H1 (cell line): ENCODE measurements at regions of chr10 and their contacts with region 1.

Region 1: DNA sequence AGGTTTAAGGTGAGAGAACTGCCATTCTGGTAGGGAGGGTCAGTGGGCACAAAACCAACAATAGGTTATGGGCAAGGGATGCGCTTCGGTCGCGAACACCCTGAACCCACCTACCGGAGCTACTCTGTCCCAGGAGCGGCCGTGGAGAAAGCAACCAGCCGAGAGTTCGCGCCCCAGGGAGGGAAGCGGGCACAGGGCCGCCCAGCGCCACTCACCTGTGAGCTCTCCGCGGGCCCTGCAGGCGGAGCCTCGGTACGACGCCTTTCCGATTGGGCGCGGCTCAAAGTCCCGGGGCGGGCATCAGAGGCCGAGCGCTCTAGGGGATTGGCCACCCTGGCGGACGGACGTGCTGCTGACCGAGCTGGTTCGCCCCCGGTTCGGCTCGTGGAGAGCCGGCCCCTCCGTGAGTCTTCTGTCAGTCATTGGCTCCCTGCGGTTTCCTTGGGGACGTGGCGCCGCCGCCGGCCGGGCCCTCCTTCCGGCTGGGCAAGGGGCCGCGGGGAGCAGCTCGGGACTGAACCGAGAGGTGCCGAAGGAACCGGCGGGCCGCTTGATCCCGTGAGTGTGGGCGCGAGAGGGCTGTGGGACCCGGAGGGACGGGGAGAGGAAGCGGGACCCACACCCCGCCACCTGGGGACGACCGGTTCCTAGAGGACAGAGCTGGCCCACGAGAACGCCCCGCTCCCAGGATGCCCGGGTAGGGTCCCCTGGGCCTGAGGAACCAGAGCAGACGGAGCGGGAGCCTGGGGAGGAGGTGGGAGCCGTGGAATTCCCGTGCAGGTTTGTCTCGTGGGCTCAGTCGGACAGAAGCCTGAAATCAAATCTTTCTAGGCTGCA is at the start of gene ENTPD7:
- DNase-seq: peak; percentile 92 to 94
- H3K4me3 ChIP-seq: peak within 1 kb of the TSS; percentile 64 to 92 (median 88)
- H3K27ac ChIP-seq: no peak within 1 kb of the TSS; the same call in 1 of the 2 replicates
- H3K4me1 ChIP-seq: no peaks in the 10 kb centered on the region; a peak in 1 of 7 replicates
- H3K27me3 ChIP-seq: peaks cover 0 to 11% (median 2%) of the 10 kb centered on the region in 4 experiments; a peak in 5 of 7 replicates
- CTCF ChIP-seq: no peak
- EP300 ChIP-seq: no peak
- POLR2A ChIP-seq: peak in 1 of 2 experiments; percentile 68; a peak in 2 of 3 replicates
- RAD21 ChIP-seq: no peak
- total RNA-seq, gene ENTPD7: 14.3 and 15.6 TPM in 2 replicates

Region 2: DNA sequence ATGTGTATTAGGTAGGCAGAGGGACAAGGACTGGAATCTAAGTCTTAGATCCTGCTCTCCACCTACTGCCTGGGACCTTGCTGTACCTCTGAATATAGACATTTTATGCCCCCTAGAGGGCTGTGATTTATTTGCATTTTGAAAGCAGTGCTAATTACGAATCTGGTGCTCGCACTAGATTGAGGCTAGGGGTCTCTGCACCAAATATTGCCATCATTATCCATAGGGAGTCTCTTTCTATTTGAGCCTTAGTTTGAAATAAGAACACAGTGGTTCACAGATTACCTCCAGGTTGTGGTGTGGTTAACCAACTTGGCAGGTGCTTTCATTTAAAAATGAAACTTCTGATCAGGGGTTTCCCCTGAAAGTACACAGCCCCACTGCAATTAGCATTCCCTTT is 288.3 kb before region 1 on chr10:
- CTCF ChIA-PET with region 1: no interaction called
- POLR2A ChIA-PET with region 1: no interaction called
- DNase-seq: no peak
- H3K4me3 ChIP-seq: no peak overlapping the region
- H3K27ac ChIP-seq: no peak overlapping the region
- H3K4me1 ChIP-seq: no peaks in the 10 kb centered on the region
- H3K27me3 ChIP-seq: no peaks in the 10 kb centered on the region
- CTCF ChIP-seq: peak in 2 of 3 experiments; percentile 49 to 61; a peak in 3 of 4 replicates
- EP300 ChIP-seq: no peak
- POLR2A ChIP-seq: no peak
- RAD21 ChIP-seq: peak; percentile 64 to 69

Region 3: DNA sequence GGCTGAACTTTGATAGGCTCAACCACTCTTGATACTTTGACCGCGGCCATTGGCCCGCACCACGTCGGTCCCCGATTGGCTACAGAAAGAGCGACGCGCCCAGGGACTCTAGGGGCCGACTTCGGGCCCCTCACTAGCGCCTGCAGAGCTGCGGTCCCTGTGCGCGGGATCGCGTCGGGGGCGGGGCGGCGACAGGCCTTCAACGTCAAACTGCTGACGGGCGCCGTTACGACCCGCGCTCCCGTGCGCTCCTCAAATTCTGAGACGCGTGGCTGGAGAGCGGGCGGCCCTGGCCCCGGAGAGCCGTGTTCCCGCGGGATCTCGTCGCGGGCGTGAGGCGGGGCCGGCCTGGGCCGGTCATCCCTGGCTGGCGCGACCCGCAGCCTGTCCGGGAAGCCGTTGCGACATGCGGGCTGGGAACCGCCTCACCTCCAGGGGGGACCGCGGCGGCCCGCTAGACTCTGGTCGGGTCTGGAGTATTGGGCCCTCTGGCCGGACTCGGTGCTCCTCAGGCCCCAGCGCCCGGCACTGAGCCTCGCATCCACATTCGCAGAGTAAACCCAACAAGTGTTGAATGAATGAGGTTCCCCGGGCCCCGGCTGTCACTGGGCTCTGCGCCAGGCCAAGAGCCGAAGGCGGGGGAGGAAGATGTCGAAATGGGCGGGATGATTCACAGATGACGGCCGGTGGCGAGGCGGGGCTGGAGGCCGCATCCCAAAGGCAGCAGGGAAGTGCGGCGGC is 38.4 kb before region 1 on chr10:
- CTCF ChIA-PET with region 1: interaction called, 11 read pairs
- POLR2A ChIA-PET with region 1: interaction called, 23 read pairs
- DNase-seq: peak in 1 of 2 experiments; percentile 88
- H3K4me3 ChIP-seq: peak overlapping the region; percentile 62 to 76 (median 70)
- H3K27ac ChIP-seq: peak overlapping the region; percentile 72
- H3K4me1 ChIP-seq: peaks cover 0 to 6% (median 3%) of the 10 kb centered on the region in 4 experiments; a peak in 6 of 7 replicates
- H3K27me3 ChIP-seq: no peaks in the 10 kb centered on the region
- CTCF ChIP-seq: no peak
- EP300 ChIP-seq: no peak
- POLR2A ChIP-seq: peak; percentile 64 to 81
- RAD21 ChIP-seq: no peak

Region 4: GRCh38 chr10:99698504-99699080 is 39.3 kb after region 1 on chr10:
- CTCF ChIA-PET with region 1: no interaction called
- POLR2A ChIA-PET with region 1: no interaction called
- DNase-seq: no peak
- H3K4me3 ChIP-seq: no peak overlapping the region
- H3K27ac ChIP-seq: no peak overlapping the region
- H3K4me1 ChIP-seq: no peaks in the 10 kb centered on the region
- H3K27me3 ChIP-seq: no peaks in the 10 kb centered on the region
- CTCF ChIP-seq: peak in 1 of 3 experiments; percentile 6; a peak in 1 of 4 replicates
- EP300 ChIP-seq: no peak
- POLR2A ChIP-seq: no peak
- RAD21 ChIP-seq: no peak; a peak in 1 of 4 replicates